Endothelial cell of umbilical vein (primary cell): ENCODE measurements at regions of chr7 and their contacts with region 1.

Region 1: DNA sequence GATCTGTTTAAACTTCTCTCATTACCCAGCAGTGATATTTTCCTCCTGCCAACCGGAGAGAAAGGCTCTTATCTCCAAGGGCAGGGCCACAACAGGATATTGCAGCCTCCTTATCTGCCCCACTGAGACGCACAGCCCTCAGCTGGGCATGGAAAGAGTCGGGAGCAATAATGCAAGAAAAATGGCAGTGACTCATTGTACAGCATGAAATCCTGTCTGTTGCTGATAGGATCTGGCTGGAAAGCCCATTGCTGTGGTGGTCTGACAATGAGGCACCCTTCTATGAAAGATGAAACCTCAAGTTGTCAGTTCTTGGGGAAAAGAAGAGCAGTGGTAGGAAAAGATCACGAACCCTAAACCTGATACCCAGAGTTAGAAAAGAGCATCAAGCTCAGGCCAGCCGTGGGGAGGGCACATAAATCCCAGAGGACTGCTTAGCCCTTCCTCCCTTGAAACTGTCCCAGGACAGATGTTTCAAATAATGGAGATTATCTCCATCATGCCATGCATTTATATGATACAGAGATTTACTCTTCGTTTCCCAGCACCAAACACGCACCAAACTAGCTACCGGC is 47.0 kb upstream of the FIGNL1 start:
- DNase-seq: peak; percentile 99
- H3K4me3 ChIP-seq: peak overlapping the region in 1 of 3 experiments; percentile 4
- H3K27ac ChIP-seq: peak overlapping the region; percentile 99
- H3K4me1 ChIP-seq: peaks cover 40% of the 10 kb centered on the region
- H3K27me3 ChIP-seq: no peaks in the 10 kb centered on the region
- CTCF ChIP-seq: no peak
- POLR2A ChIP-seq: peak; percentile 67

Region 2: DNA sequence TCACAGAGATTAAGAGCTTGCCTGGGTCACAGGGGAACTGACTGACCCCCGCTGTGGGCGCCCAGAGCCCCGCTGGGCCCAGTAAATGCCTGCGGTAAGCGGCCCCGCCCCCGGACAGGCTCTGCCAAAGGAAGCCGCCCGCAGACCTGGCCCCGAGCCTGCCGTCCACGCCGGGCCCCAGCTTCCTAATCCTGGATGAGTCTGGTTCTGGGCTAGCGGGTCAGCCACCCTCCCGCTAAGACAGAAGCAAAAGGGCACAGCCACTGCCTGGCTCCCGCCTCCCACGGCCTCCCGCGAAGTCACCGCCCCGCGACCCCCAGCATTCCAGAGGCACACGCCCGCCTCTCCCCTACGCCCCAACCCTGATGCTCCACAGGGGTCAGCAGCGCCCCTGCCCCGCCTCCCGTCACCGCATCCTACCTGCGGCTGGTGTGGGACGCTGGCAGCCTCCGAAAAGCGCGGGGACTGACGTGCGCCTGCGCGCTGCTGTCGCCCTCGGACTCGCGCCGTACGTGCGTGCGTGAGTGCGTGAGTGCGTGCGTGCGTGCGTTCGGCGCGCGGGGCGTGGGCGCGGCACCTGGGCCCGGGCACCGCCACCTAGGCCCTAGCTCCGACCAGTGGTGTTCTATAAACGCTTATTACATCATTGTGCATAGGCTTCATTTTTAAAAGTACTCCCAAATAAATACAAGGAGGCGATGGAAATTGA is 47.1 kb before region 1 on chr7 and contains the start of gene FIGNL1:
- CTCF ChIA-PET with region 1: no interaction called
- POLR2A ChIA-PET with region 1: no interaction called
- dilution Hi-C with region 1: no loop called
- intact Hi-C with region 1: loop called (anchors 1 kb)
- DNase-seq: peak; percentile 78
- H3K4me3 ChIP-seq: peak within 1 kb of the TSS; percentile 44 to 98 (median 64)
- H3K27ac ChIP-seq: peak within 1 kb of the TSS; percentile 66
- H3K4me1 ChIP-seq: peaks cover 38% of the 10 kb centered on the region
- H3K27me3 ChIP-seq: peaks cover 0 to 5% of the 10 kb centered on the region in 2 experiments
- CTCF ChIP-seq: no peak
- POLR2A ChIP-seq: peak; percentile 79
- total RNA-seq, gene FIGNL1: 37.2 and 49.3 TPM in 2 replicates

Region 3: GRCh38 chr7:50507898-50508470 is 10.8 kb after region 1 on chr7:
- CTCF ChIA-PET with region 1: interaction called, 10 read pairs
- POLR2A ChIA-PET with region 1: no interaction called
- dilution Hi-C with region 1: no loop called
- intact Hi-C with region 1: no loop called
- DNase-seq: no peak
- H3K4me3 ChIP-seq: no peak overlapping the region
- H3K27ac ChIP-seq: no peak overlapping the region
- H3K4me1 ChIP-seq: no peaks in the 10 kb centered on the region
- H3K27me3 ChIP-seq: no peaks in the 10 kb centered on the region
- CTCF ChIP-seq: no peak
- POLR2A ChIP-seq: no peak

Region 4: GRCh38 chr7:50610521-50611277 is 113.5 kb after region 1 on chr7:
- CTCF ChIA-PET with region 1: no interaction called
- POLR2A ChIA-PET with region 1: no interaction called
- dilution Hi-C with region 1: no loop called
- intact Hi-C with region 1: loop called (anchors 1 kb)
- DNase-seq: peak; percentile 52
- H3K4me3 ChIP-seq: no peak overlapping the region
- H3K27ac ChIP-seq: peak overlapping the region; percentile 38
- H3K4me1 ChIP-seq: peaks cover 23% of the 10 kb centered on the region
- H3K27me3 ChIP-seq: no peaks in the 10 kb centered on the region
- CTCF ChIP-seq: no peak
- POLR2A ChIP-seq: no peak

Region 5: GRCh38 chr7:50953820-50954219 is 456.7 kb after region 1 on chr7:
- CTCF ChIA-PET with region 1: no interaction called
- POLR2A ChIA-PET with region 1: no interaction called
- dilution Hi-C with region 1: no loop called
- intact Hi-C with region 1: loop called (anchors 5 kb)
- DNase-seq: peak; percentile 81
- H3K4me3 ChIP-seq: no peak overlapping the region
- H3K27ac ChIP-seq: peak overlapping the region; percentile 85
- H3K4me1 ChIP-seq: peaks cover 57% of the 10 kb centered on the region
- H3K27me3 ChIP-seq: no peaks in the 10 kb centered on the region
- CTCF ChIP-seq: no peak
- POLR2A ChIP-seq: peak; percentile 33